HCT116 (cell line): ENCODE measurements at regions of chr2 and their contacts with region 1.

Region 1: DNA sequence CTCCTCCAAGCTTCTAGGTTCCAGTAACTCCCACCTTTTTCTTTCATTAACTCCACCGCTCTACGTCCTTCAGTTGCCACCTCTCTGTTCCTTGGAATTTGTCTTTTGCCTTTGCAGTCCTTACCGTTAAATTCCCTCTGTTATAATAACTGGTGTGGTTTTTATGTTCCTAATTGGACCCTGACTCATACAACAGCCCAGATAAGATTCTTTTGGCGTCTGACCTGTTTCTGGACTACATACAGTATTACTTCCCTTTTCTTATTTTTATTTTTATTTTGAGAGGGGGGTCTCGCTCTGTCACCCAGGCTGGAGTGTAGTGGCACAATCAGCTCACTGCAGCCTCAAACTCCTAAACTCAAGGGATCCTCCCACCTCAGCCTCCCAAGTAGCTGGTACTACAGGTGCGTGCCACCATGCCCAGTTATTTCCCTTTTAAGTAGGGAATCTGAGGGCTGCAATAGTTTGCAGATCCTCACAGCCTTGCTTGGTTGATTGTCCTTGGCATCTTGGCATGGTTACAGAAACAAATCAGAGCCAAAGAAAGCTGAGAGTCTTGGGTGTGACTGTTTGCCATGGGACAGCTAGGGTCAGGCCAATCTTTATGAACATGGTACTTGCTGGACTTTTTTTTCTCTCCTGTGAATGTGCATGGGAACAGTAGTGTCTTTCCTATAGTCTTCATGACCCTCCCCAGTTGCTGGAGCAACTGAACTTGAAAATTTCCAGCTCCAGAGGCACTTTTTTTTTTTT is 22.0 kb downstream of the TCF23 start:
- DNase-seq: no peak
- ATAC-seq: no peak
- H3K4me3 ChIP-seq: no peak overlapping the region
- H3K27ac ChIP-seq: no peak overlapping the region
- H3K4me1 ChIP-seq: peaks cover 0 to 4% of the 10 kb centered on the region in 2 experiments; a peak in 1 of 4 replicates
- H3K27me3 ChIP-seq: peaks cover 9% of the 10 kb centered on the region; the same call in 1 of the 2 replicates
- CTCF ChIP-seq: no peak
- POLR2A ChIP-seq: no peak
- RAD21 ChIP-seq: no peak

Region 2: DNA sequence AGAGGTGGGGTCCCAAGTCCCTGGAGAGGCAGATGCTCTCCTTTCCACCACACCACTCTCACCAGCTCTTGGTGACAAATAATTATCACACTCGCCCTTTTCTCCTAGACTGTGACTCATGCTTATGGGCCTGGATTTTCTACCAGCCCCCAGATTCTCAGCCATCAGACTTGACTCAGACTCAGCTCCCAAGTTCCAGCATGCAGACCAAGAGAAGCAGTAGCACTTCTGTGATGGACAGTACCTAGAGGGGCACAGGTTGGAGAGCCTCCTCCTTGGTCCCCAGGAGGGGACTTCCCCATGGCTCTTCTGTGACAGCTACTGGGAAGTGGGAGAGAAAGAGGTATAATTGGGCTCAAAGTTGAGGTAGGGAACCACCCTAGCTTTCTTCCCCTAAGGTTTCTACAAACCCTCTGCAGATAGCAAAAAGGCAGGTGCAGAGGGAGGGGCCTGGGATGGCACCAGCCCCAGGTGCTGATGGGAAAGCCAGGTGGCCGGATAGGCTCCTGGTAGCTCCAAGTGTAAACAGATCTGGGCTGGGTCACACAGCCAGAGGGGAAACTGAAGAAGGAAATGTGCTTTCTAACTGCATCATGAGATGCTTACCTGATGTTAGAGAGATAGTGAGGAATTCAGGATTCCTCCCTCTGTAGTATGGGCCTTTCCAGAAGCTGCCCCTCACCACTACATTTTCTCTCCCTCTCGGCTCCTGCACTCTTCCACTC is 17.8 kb before region 1 on chr2:
- CTCF ChIA-PET with region 1: interaction called, 10 read pairs
- POLR2A ChIA-PET with region 1: interaction called, 4 read pairs
- RAD21 ChIA-PET with region 1: no interaction called
- intact Hi-C with region 1: no loop called
- DNase-seq: no peak
- ATAC-seq: peak; percentile 27; the same call in 1 of the 2 replicates
- H3K4me3 ChIP-seq: no peak overlapping the region
- H3K27ac ChIP-seq: no peak overlapping the region
- H3K4me1 ChIP-seq: peaks cover 0 to 17% of the 10 kb centered on the region in 2 experiments; a peak in 2 of 4 replicates
- H3K27me3 ChIP-seq: no peaks in the 10 kb centered on the region
- CTCF ChIP-seq: no peak
- POLR2A ChIP-seq: no peak
- RAD21 ChIP-seq: no peak